ENCODE measurements at regions of chr12 and their contacts with region 1.

Region 1: GRCh38 chr12:15856097-15856982 is 25.8 kb upstream of the STRAP start:
- DNase-seq: peak; percentile 67

Region 2: GRCh38 chr12:15244341-15244740 is 612.0 kb before region 1 on chr12:
- in situ Hi-C with region 1: no loop called
- DNase-seq: no peak

Region 3: GRCh38 chr12:15584366-15585041 is 271.8 kb before region 1 on chr12:
- in situ Hi-C with region 1: loop called (anchors 10 kb)
- DNase-seq: peak; percentile 45

Measured in KBM-7 (cell line).